PC-9 (cell line): ENCODE measurements at regions of chr4 and their contacts with region 1.

Region 1: DNA sequence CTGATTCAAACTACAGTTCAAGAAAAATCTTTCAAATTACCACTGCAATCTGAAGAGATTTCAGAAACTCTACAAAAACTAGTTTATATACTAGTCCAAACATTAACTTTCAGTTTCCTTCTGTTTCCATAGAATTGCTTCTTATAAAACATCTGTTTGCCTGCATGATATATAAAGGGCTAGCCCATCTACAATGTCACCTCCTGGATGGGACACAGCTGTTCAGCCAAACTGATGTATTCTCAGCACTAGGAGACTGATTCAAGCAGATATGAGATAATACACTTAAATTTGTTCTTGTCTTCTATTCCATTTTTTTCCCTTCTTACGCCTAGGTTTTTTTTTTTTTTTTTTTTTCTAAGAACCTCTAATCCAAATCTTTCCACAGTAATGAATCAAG is 1569.7 kb upstream of the IGFBP7 start:
- DNase-seq: no peak
- H3K4me3 ChIP-seq: no peak overlapping the region
- H3K27ac ChIP-seq: no peak overlapping the region
- H3K4me1 ChIP-seq: no peaks in the 10 kb centered on the region
- H3K27me3 ChIP-seq: no peaks in the 10 kb centered on the region
- CTCF ChIP-seq: no peak

Region 2: DNA sequence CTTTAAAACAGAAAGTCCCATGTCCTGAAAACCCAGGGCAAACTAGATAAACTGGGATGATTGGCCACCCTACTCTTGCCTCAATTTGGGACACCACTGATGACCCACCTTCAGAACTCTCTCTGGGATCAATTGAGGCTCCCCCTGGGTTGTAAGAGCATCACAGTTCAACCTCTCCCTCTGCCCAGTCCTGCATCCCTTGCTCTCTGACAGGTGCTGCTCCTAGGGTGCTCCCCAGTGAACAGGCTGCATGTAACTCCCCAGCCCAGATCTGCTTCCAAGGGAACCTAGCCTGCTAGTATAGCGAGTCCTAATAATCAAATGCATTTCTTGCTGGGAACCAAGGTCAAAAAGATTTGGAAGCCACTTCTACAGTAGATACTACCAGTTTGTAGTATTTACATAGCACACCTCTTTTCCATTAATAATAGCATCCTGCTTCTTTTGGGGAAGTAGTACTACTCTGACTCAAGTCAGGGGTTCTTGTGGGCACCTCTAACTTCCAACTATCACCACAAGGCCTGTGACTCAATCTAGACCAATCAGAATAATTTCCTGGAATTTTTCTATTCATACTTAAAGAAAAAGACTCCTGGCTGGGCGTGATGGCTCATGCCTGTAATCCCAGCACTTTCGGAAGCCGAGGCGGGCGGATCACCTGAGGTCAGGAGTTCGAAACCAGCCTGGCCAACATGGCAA is 1816.3 kb before region 1 on chr4:
- CTCF ChIA-PET with region 1: no interaction called
- POLR2A ChIA-PET with region 1: no interaction called
- intact Hi-C with region 1: no loop called
- DNase-seq: no peak
- H3K4me3 ChIP-seq: no peak overlapping the region
- H3K27ac ChIP-seq: no peak overlapping the region
- H3K4me1 ChIP-seq: no peaks in the 10 kb centered on the region
- H3K27me3 ChIP-seq: no peaks in the 10 kb centered on the region
- CTCF ChIP-seq: no peak

Region 3: GRCh38 chr4:59200992-59201391 is 521.1 kb after region 1 on chr4:
- CTCF ChIA-PET with region 1: interaction called, 14 read pairs
- POLR2A ChIA-PET with region 1: no interaction called
- intact Hi-C with region 1: no loop called
- DNase-seq: no peak
- H3K4me3 ChIP-seq: no peak overlapping the region
- H3K27ac ChIP-seq: no peak overlapping the region
- H3K4me1 ChIP-seq: no peaks in the 10 kb centered on the region
- H3K27me3 ChIP-seq: no peaks in the 10 kb centered on the region
- CTCF ChIP-seq: no peak